ENCODE measurements at regions of chr21 and their contacts with region 1.

Region 1: DNA sequence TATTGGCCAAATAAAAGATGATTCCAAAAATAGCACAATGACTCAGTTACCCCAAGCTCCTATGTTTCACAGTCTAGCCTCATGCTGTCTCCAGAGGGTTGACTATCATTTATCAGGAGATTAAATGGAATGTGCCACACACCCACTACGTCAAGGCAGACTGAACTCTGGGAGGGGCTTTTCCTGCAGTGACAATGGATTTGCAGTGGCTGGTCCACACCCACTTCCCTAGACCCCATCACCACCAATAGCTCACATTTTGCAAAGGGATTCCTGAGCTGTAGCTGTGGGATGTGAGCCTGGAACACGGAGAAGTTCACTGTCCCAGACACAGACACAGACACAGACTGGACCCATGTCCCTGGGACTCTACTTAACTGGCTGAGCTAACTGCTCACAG is 77.1 kb downstream of the HLCS start:
- DNase-seq: peak in 1 of 2 donors; percentile 57
- ATAC-seq: peak; percentile 80 to 96 (median 92)
- H3K4me3 ChIP-seq: no peak overlapping the region
- H3K27ac ChIP-seq: peak overlapping the region in 9 of 10 donors; percentile 52 to 83 (median 77)
- H3K4me1 ChIP-seq: peaks cover 0 to 28% (median 0%) of the 10 kb centered on the region in 9 donors
- H3K27me3 ChIP-seq: no peaks in the 10 kb centered on the region
- CTCF ChIP-seq: no peak

Region 2: GRCh38 chr21:36647279-36648093 is 241.9 kb before region 1 on chr21:
- intact Hi-C with region 1: no loop called
- DNase-seq: peak in 1 of 2 donors; percentile 8
- ATAC-seq: peak in 2 of 8 donors; percentile 53 to 62
- H3K4me3 ChIP-seq: no peak overlapping the region
- H3K27ac ChIP-seq: no peak overlapping the region
- H3K4me1 ChIP-seq: peaks cover 0 to 7% (median 0%) of the 10 kb centered on the region in 9 donors
- H3K27me3 ChIP-seq: peaks cover 0 to 27% (median 5%) of the 10 kb centered on the region in 7 donors
- CTCF ChIP-seq: no peak

Region 3: DNA sequence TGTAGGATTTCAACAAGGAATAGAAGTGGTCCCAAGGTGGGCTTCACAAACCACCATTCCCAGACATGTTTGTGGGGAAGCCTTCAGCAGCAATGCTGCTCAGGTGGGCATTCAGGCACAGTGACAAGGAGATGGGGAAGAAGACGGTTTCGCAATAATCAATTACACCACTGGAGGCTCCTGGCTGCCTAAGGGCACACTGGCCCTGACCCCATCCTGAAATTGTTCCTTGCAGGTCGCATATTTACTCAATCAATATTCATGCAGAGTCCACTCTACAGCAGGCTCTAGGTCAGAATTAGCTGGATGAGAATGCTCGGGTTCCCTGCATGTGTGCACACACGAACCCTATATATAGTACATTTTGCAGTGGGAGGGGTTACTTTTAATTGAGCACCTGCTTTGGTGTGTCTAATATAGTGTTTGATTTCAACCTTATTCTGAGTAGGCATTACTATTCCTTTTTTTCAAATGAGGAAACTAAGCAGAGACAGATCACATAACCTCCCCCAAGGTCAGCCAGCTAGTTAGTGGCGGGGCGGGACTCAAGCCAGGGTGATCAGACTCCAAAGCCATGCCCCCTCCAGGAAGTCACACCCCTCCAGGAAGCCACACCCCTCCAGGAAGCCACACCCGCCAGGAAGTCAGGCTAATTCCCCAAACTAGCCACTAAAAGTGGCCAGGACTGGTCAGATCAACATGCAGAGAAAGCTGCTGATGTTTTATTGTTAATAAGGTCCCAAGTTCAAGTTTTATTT is 29.5 kb before region 1 on chr21:
- intact Hi-C with region 1: loop called in 1 of 10 experiments (anchors 2 kb)
- DNase-seq: peak; percentile 81 to 88
- ATAC-seq: peak; percentile 95 to 99 (median 98)
- H3K4me3 ChIP-seq: no peak overlapping the region
- H3K27ac ChIP-seq: peak overlapping the region in 9 of 10 donors; percentile 7 to 76 (median 65)
- H3K4me1 ChIP-seq: peaks cover under 1 to 18% (median 9%) of the 10 kb centered on the region in 9 donors
- H3K27me3 ChIP-seq: no peaks in the 10 kb centered on the region
- CTCF ChIP-seq: no peak

Region 4: DNA sequence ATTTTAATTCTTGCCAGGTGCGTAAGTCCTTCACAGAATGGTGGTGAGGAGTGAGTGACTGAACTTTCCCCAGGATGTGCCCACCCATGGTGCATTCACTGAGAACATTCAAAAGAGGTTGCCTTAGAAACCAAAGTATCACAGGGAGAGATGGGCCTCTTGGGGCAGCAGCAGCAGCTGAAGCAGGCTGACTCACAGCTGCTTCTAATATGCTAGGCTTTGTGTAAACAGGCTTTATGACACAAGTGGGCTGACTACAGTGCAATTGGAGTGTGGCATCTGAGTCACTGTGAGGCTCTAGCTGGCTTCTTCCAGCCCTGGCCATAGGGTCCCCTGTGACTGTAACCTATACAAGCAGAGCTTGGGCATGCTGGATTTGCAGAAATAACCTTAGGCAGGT is 170.9 kb after region 1 on chr21:
- intact Hi-C with region 1: no loop called
- DNase-seq: peak in 1 of 2 donors; percentile 27
- ATAC-seq: peak; percentile 62 to 94 (median 88)
- H3K4me3 ChIP-seq: no peak overlapping the region
- H3K27ac ChIP-seq: no peak overlapping the region
- H3K4me1 ChIP-seq: peaks cover 0 to 10% (median 0%) of the 10 kb centered on the region in 9 donors
- H3K27me3 ChIP-seq: no peaks in the 10 kb centered on the region
- CTCF ChIP-seq: peak in 1 of 9 donors; percentile 7

Measured in heart right ventricle (tissue), 16 donors.